Activated naive CD4-positive, alpha-beta T cell treated with anti-CD3 and anti-CD28 coated beads for 36 hours (primary cell): ENCODE measurements at regions of chr11 and their contacts with region 1.

Region 1: DNA sequence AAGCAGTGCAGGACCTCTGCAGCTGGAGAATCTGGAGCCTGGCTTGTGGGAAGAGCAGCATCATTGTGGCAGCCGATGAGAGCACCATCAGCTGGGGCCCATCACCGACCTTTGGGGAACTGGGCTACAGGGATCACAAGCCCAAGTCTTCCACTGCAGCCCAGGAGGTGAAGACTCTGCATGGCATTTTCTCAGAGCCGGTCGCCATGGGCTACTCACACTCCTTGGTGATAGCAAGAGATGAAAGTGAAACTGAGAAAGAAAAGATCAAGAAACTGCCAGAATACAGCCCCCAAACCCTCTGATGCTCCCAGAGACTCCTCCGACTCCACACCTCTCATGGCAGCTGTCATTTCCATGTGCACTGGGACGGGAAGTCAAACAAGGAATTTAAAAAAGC is 35.6 kb downstream of the ASRGL1 start:
- DNase-seq: peak; percentile 12
- H3K4me3 Mint-ChIP-seq: no peak overlapping the region
- H3K27ac Mint-ChIP-seq: no peak overlapping the region
- H3K4me1 Mint-ChIP-seq: peaks cover 3% of the 10 kb centered on the region
- H3K27me3 Mint-ChIP-seq: no peaks in the 10 kb centered on the region

Region 2: GRCh38 chr11:62169091-62169847 is 203.6 kb before region 1 on chr11:
- CTCF ChIA-PET with region 1: interaction called, 3 read pairs
- intact Hi-C with region 1: loop called (anchors 1 kb)
- DNase-seq: no peak
- H3K4me3 Mint-ChIP-seq: no peak overlapping the region
- H3K27ac Mint-ChIP-seq: no peak overlapping the region
- H3K4me1 Mint-ChIP-seq: peaks cover 4% of the 10 kb centered on the region
- H3K27me3 Mint-ChIP-seq: peaks cover 19% of the 10 kb centered on the region

Region 3: DNA sequence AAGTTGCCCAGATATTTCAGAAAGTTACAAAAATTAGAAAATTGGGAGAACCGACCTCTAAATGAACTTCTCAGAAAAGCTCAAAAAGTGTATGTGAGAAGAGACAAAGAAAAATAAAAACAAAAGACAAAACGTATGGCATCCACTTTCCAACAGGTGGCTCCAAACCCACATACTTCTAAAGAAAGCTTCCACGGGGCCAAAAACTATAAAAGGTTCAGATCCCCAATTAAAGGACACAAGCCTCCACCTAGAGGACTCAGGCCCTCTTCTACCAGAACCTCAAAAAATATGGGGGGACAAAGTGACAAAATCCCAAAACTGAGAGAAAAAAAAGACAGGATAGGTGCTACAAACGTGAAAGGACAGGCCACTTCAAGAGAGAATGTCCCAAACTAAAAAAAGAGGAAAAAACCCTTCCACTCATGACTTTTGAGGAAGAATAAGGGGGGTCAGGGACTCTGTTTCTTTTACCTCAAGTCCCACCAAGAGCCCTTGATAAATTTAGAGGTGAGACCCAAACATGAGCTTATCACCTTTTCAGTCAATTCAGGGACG is 155.6 kb before region 1 on chr11:
- CTCF ChIA-PET with region 1: no interaction called
- intact Hi-C with region 1: loop called (anchors 2 kb)
- DNase-seq: peak; percentile 15
- H3K4me3 Mint-ChIP-seq: no peak overlapping the region
- H3K27ac Mint-ChIP-seq: no peak overlapping the region
- H3K4me1 Mint-ChIP-seq: no peaks in the 10 kb centered on the region
- H3K27me3 Mint-ChIP-seq: peaks cover 6% of the 10 kb centered on the region

Region 4: DNA sequence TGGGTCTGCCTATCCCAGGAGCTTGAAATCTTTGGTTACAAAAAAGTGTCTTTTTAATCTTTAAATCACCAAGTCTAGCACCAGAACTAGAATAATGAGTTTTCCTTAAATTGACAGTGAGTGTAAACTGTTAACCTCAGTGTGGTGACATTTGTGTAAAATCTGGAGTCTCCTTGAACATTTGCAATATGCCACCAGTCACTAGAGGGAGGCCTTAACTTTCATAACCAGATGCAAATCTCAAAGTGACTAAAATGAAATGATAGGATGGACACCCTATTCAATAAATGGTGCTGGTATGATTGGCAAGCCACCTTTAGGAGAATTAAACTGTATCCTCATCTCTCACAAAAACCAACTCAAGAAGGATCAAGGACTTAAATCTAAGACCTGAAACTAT is 139.1 kb before region 1 on chr11:
- CTCF ChIA-PET with region 1: no interaction called
- intact Hi-C with region 1: loop called (anchors 5 kb)
- DNase-seq: no peak
- H3K4me3 Mint-ChIP-seq: no peak overlapping the region
- H3K27ac Mint-ChIP-seq: no peak overlapping the region
- H3K4me1 Mint-ChIP-seq: no peaks in the 10 kb centered on the region
- H3K27me3 Mint-ChIP-seq: peaks cover 19% of the 10 kb centered on the region

Region 5: GRCh38 chr11:62337303-62338181 is 35.3 kb before region 1 on chr11 and contains the start of gene ASRGL1:
- CTCF ChIA-PET with region 1: interaction called, 29 read pairs
- intact Hi-C with region 1: loop called (anchors 1 kb)
- DNase-seq: peak; percentile 75
- H3K4me3 Mint-ChIP-seq: peak within 1 kb of the TSS; percentile 83
- H3K27ac Mint-ChIP-seq: peak within 1 kb of the TSS; percentile 16
- H3K4me1 Mint-ChIP-seq: peaks cover 9% of the 10 kb centered on the region
- H3K27me3 Mint-ChIP-seq: peaks cover 7% of the 10 kb centered on the region
- total RNA-seq, gene ASRGL1: 9.5 to 11.6 TPM

Region 6: DNA sequence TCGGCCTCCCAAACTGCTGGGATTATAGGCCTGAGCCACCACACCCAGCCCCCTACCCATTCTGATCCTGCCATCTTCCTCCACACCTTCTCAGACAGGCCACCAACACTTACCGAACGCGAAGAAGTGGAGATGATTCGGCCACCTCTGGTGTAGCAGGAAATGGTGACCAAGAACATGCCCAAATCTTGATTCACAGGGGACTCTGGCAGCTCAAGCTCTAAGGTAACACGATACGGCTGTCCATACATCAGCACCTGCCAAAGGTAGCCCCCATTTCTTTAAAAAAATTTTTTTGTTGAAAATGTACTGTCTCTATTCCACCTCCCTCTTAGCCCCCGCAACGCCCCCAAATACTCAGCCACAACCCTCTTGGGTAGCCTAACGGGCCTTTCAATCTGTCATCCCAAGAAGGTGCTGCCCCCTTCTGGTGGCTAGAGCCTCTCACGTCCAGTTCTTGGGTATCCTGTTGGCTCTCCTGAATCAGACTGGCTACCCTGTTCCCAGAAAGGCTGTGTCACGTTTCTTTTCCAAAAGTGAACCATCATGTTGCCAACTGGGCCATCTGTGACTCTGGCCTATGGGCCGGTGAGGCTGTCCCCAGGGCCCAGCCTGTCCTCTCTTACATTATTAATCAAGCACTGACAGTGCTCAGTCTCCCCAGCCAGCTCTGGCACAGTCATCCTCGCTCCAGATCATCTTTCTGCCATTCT is 321.7 kb after region 1 on chr11:
- CTCF ChIA-PET with region 1: no interaction called
- intact Hi-C with region 1: no loop called
- DNase-seq: peak; percentile 85
- H3K4me3 Mint-ChIP-seq: no peak overlapping the region
- H3K27ac Mint-ChIP-seq: peak overlapping the region; percentile 4
- H3K4me1 Mint-ChIP-seq: no peaks in the 10 kb centered on the region
- H3K27me3 Mint-ChIP-seq: no peaks in the 10 kb centered on the region